ENCODE measurements at regions of chr7 and their contacts with region 1.

Region 1: DNA sequence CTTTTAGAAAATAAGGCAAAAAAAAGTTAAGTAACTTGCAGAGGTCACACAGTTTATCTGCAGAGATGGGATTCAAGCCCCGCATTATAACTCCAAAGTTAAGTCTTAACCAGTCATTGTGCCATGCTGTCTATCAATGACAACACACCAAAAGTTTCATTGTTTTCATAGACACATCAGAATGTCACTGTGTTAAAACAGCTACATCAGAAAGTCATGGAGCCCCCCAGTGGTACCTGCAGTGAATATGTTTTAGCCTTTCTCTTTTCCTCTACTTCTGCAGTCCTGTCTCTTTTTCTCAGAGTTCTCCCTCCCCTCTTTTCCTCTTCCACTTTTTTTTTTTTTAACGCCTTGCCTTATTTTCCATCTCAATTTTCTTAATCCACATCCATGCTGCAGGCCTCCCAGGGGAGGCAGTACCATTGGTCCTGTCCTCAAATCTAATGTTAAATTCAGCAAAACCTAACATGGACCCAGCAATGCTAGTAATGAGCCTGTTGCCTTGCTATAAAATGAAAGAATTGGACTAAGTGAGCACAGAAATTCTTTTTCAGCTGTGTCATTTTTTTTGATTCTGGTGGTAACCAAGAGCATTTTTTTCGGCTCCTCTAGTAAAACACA is 3.8 kb upstream of the NRCAM start:
- DNase-seq: peak; percentile 55 to 63
- ATAC-seq: peak in 1 of 2 experiments; percentile 36; a peak in 3 of 6 replicates
- H3K4me3 ChIP-seq: no peak overlapping the region
- H3K27ac ChIP-seq: peak overlapping the region; percentile 44 to 48; a peak in 3 of 6 replicates
- H3K4me1 ChIP-seq: peaks cover 23% of the 10 kb centered on the region
- CTCF ChIP-seq: peak; percentile 83
- EP300 ChIP-seq: no peak
- POLR2A ChIP-seq: no peak
- RAD21 ChIP-seq: peak; percentile 81 to 85

Region 2: GRCh38 chr7:108181073-108181985 is 278.7 kb before region 1 on chr7:
- CTCF ChIA-PET with region 1: interaction called, 23 read pairs
- POLR2A ChIA-PET with region 1: interaction called, 3 read pairs
- DNase-seq: peak; percentile 39 to 73
- ATAC-seq: peak; percentile 65 to 78; a peak in 5 of 6 replicates
- H3K4me3 ChIP-seq: no peak overlapping the region
- H3K27ac ChIP-seq: peak overlapping the region; percentile 62 to 63; a peak in 5 of 6 replicates
- H3K4me1 ChIP-seq: peaks cover 12% of the 10 kb centered on the region
- CTCF ChIP-seq: peak; percentile 91
- EP300 ChIP-seq: no peak
- POLR2A ChIP-seq: no peak
- RAD21 ChIP-seq: peak; percentile 92 to 93

Region 3: DNA sequence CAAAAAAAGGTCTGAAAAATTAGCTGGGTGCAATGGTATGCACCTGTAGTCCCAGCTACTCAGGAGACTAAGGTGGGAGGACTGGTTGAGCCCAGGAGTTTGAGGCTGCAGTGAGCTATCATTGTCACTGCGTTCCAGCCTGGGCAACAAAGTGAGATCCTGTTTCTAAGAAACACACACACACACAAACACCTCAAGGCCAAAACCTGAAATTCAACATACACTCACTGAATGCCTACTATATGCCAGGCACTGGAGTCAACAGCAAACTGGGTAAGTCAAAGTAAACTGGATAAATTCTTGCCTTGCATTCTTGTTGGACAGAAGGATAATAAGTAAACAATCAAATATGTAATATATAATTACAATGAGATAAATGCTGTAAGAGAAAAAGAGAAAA is 17.7 kb after region 1 on chr7:
- CTCF ChIA-PET with region 1: no interaction called
- POLR2A ChIA-PET with region 1: no interaction called
- DNase-seq: no peak
- ATAC-seq: no peak
- H3K4me3 ChIP-seq: no peak overlapping the region
- H3K27ac ChIP-seq: no peak overlapping the region
- H3K4me1 ChIP-seq: no peaks in the 10 kb centered on the region
- CTCF ChIP-seq: no peak
- EP300 ChIP-seq: no peak
- POLR2A ChIP-seq: no peak
- RAD21 ChIP-seq: no peak

Region 4: GRCh38 chr7:109111086-109111485 is 651.0 kb after region 1 on chr7:
- CTCF ChIA-PET with region 1: no interaction called
- POLR2A ChIA-PET with region 1: no interaction called
- DNase-seq: no peak
- ATAC-seq: no peak
- H3K4me3 ChIP-seq: no peak overlapping the region
- H3K27ac ChIP-seq: no peak overlapping the region
- H3K4me1 ChIP-seq: no peaks in the 10 kb centered on the region
- CTCF ChIP-seq: no peak
- EP300 ChIP-seq: no peak
- POLR2A ChIP-seq: no peak
- RAD21 ChIP-seq: no peak

Measured in A549 (cell line).